Aorta (tissue), 5 donors: ENCODE measurements at regions of chr15 and their contacts with region 1.

Region 1: DNA sequence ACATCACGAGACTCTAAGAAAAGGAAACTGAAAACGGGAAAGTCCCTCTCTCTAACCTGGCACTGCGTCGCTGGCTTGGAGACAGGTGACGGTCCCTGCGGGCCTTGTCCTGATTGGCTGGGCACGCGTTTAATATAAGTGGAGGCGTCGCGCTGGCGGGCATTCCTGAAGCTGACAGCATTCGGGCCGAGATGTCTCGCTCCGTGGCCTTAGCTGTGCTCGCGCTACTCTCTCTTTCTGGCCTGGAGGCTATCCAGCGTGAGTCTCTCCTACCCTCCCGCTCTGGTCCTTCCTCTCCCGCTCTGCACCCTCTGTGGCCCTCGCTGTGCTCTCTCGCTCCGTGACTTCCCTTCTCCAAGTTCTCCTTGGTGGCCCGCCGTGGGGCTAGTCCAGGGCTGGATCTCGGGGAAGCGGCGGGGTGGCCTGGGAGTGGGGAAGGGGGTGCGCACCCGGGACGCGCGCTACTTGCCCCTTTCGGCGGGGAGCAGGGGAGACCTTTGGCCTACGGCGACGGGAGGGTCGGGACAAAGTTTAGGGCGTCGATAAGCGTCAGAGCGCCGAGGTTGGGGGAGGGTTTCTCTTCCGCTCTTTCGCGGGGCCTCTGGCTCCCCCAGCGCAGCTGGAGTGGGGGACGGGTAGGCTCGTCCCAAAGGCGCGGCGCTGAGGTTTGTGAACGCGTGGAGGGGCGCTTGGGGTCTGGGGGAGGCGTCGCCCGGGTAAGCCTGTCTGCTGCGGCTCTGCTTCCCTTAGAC is at the start of gene B2M:
- DNase-seq: peak; percentile 97 to 98
- ATAC-seq: peak; percentile 97
- H3K4me3 ChIP-seq: peak within 1 kb of the TSS; percentile 77 to 96
- H3K27ac ChIP-seq: peak within 1 kb of the TSS; percentile 92 to 99
- H3K4me1 ChIP-seq: peaks cover 0 to 1% of the 10 kb centered on the region in 2 donors
- H3K27me3 ChIP-seq: no peaks in the 10 kb centered on the region
- total RNA-seq, gene B2M: 2,130 to 2,403 TPM

Region 2: DNA sequence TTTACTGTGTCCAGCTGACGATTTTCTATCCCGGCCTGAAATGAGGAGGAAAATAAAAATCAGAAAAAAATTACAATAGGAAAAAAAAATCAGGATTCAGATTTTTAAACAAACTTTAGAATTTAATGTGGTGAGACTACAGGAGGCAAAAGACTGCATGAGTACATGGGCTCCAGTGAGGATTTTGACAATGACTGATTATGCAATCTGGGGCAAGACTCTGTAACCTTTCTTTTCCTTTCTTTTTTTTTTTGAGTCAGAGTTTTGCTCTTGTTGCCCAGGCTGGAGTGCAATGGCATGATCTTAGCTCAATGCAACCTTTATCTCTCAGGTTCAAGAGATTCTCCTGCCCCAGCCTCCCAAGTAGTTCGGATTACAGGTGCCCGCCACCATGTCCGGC is 77.9 kb before region 1 on chr15:
- intact Hi-C with region 1: no loop called
- DNase-seq: no peak
- ATAC-seq: no peak
- H3K4me3 ChIP-seq: no peak overlapping the region
- H3K27ac ChIP-seq: no peak overlapping the region
- H3K4me1 ChIP-seq: no peaks in the 10 kb centered on the region
- H3K27me3 ChIP-seq: no peaks in the 10 kb centered on the region

Region 3: GRCh38 chr15:44663409-44664308 is 47.9 kb before region 1 on chr15 and contains the start of gene SPG11:
- intact Hi-C with region 1: loop called (anchors 5 kb)
- DNase-seq: peak; percentile 99
- ATAC-seq: peak; percentile 99
- H3K4me3 ChIP-seq: peak within 1 kb of the TSS; percentile 68 to 91
- H3K27ac ChIP-seq: peak within 1 kb of the TSS; percentile 88
- H3K4me1 ChIP-seq: no peaks in the 10 kb centered on the region
- H3K27me3 ChIP-seq: no peaks in the 10 kb centered on the region
- total RNA-seq, gene SPG11: 61.1 to 96.3 TPM